ENCODE measurements at regions of chr7 and their contacts with region 1.

Region 1: DNA sequence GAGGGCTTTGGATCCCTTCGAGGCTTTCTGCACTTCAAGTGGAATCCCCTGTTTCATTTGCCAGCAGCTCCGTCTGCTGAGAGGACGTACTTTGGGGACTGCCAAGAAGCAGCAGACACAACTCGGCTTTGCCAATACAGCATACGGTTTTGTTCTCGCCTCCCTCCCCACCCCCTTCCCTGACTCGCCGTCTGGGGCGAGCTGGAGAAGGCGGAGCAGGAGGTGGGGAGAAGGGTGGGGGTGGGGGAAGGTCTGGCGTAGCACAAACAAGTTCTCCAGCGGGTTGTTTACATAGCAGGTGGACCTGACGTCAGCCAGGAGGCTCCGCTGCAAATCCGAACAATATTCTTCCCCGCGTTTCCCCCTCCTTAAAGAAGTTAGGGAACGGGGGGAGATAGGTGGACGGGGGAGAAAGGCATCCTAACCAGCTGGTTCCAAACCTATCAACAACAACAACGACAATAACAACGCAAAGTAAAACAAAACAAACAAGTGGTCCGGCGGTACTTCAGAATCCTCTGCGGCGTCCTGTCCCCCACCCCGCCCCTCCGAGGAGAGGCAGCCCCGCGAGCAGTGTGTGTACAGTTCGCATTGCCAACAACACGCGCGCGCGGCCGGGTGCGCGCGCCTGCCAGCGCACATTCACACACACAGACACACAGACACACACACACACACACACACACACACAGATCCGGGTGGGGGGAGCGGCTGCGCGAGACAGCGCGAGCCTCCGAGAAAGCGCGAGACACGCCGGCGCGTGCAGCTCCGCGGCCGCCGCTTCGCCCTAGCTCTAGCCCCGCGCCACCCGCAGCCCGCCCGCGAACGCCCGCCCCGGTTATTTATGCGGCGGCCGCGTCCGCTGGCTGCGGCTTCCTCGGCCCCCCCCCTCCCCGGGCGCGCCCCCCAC is 167.0 kb upstream of the PPP1R3A start:
- DNase-seq: peak; percentile 64
- ATAC-seq: peak; percentile 79
- H3K4me3 ChIP-seq: peak overlapping the region; percentile 59 to 80
- H3K27ac ChIP-seq: no peak overlapping the region; the same call in 1 of the 2 replicates
- H3K4me1 ChIP-seq: peaks cover 4 to 27% of the 10 kb centered on the region in 2 experiments; a peak in 3 of 4 replicates
- H3K27me3 ChIP-seq: no peaks in the 10 kb centered on the region
- CTCF ChIP-seq: no peak
- POLR2A ChIP-seq: no peak
- RAD21 ChIP-seq: no peak

Region 2: DNA sequence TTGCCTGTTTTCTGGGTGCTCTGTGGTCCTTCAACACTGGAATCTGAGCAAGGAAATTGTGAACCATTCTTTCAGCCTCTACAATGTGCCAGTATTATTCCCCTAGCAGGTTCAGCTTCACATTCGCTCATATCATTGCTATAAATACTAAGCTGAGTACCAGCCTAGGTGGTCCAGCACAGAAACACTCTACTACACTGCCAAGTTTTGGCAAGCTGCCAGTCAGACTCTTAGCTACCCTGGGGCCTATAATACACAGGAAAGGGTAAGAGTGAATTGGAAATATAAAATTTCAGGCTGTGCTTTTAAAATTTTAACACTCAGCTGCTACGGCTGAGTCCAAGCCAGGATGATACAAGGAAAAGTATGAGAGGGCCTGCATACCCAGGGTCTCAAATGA is 117.1 kb before region 1 on chr7:
- CTCF ChIA-PET with region 1: no interaction called
- POLR2A ChIA-PET with region 1: no interaction called
- RAD21 ChIA-PET with region 1: no interaction called
- intact Hi-C with region 1: no loop called
- DNase-seq: no peak
- ATAC-seq: no peak
- H3K4me3 ChIP-seq: no peak overlapping the region
- H3K27ac ChIP-seq: no peak overlapping the region
- H3K4me1 ChIP-seq: no peaks in the 10 kb centered on the region
- H3K27me3 ChIP-seq: no peaks in the 10 kb centered on the region
- CTCF ChIP-seq: no peak
- POLR2A ChIP-seq: no peak
- RAD21 ChIP-seq: no peak

Region 3: GRCh38 chr7:114405427-114405826 is 319.6 kb after region 1 on chr7:
- CTCF ChIA-PET with region 1: interaction called, 5 read pairs
- POLR2A ChIA-PET with region 1: no interaction called
- RAD21 ChIA-PET with region 1: interaction called in 1 of 2 experiments, 3 read pairs
- intact Hi-C with region 1: loop called (anchors 1 kb)
- DNase-seq: peak; percentile 8
- ATAC-seq: peak; percentile 74
- H3K4me3 ChIP-seq: no peak overlapping the region
- H3K27ac ChIP-seq: no peak overlapping the region
- H3K4me1 ChIP-seq: no peaks in the 10 kb centered on the region
- H3K27me3 ChIP-seq: no peaks in the 10 kb centered on the region
- CTCF ChIP-seq: peak; percentile 41 to 67 (median 51); a peak in 4 of 6 replicates
- POLR2A ChIP-seq: no peak
- RAD21 ChIP-seq: peak; percentile 71

Region 4: GRCh38 chr7:114539575-114539974 is 453.7 kb after region 1 on chr7:
- CTCF ChIA-PET with region 1: interaction called, 9 read pairs
- POLR2A ChIA-PET with region 1: no interaction called
- RAD21 ChIA-PET with region 1: interaction called, 3 to 6 read pairs
- intact Hi-C with region 1: loop called (anchors 5 kb)
- DNase-seq: peak; percentile 3
- ATAC-seq: peak; percentile 77
- H3K4me3 ChIP-seq: no peak overlapping the region
- H3K27ac ChIP-seq: no peak overlapping the region
- H3K4me1 ChIP-seq: no peaks in the 10 kb centered on the region
- H3K27me3 ChIP-seq: no peaks in the 10 kb centered on the region
- CTCF ChIP-seq: peak; percentile 33 to 47 (median 43); a peak in 4 of 6 replicates
- POLR2A ChIP-seq: no peak
- RAD21 ChIP-seq: peak; percentile 48

Region 5: GRCh38 chr7:114865564-114865963 is 779.7 kb after region 1 on chr7:
- CTCF ChIA-PET with region 1: interaction called, 10 read pairs
- POLR2A ChIA-PET with region 1: no interaction called
- RAD21 ChIA-PET with region 1: no interaction called
- intact Hi-C with region 1: loop called (anchors 5 kb)
- DNase-seq: peak; percentile 46
- ATAC-seq: peak; percentile 89
- H3K4me3 ChIP-seq: no peak overlapping the region
- H3K27ac ChIP-seq: no peak overlapping the region
- H3K4me1 ChIP-seq: no peaks in the 10 kb centered on the region
- H3K27me3 ChIP-seq: no peaks in the 10 kb centered on the region
- CTCF ChIP-seq: peak; percentile 71 to 82 (median 75)
- POLR2A ChIP-seq: no peak
- RAD21 ChIP-seq: peak; percentile 92

Region 6: GRCh38 chr7:114910787-114911186 is 824.9 kb after region 1 on chr7:
- CTCF ChIA-PET with region 1: no interaction called
- POLR2A ChIA-PET with region 1: no interaction called
- RAD21 ChIA-PET with region 1: no interaction called
- intact Hi-C with region 1: no loop called
- DNase-seq: no peak
- ATAC-seq: no peak
- H3K4me3 ChIP-seq: no peak overlapping the region
- H3K27ac ChIP-seq: no peak overlapping the region
- H3K4me1 ChIP-seq: no peaks in the 10 kb centered on the region
- H3K27me3 ChIP-seq: no peaks in the 10 kb centered on the region
- CTCF ChIP-seq: no peak
- POLR2A ChIP-seq: no peak
- RAD21 ChIP-seq: no peak

Region 7: GRCh38 chr7:115851291-115851690 is 1765.4 kb after region 1 on chr7:
- CTCF ChIA-PET with region 1: interaction called, 31 read pairs
- POLR2A ChIA-PET with region 1: interaction called, 3 read pairs
- RAD21 ChIA-PET with region 1: no interaction called
- intact Hi-C with region 1: loop called (anchors 1 kb)
- DNase-seq: peak; percentile 54
- ATAC-seq: peak; percentile 65
- H3K4me3 ChIP-seq: no peak overlapping the region
- H3K27ac ChIP-seq: no peak overlapping the region
- H3K4me1 ChIP-seq: no peaks in the 10 kb centered on the region
- H3K27me3 ChIP-seq: no peaks in the 10 kb centered on the region
- CTCF ChIP-seq: peak in 2 of 3 experiments; percentile 58 to 71; a peak in 4 of 6 replicates
- POLR2A ChIP-seq: no peak
- RAD21 ChIP-seq: peak; percentile 86

Measured in HCT116 (cell line).